ENCODE measurements at regions of chr2 and their contacts with region 1.

Region 1: DNA sequence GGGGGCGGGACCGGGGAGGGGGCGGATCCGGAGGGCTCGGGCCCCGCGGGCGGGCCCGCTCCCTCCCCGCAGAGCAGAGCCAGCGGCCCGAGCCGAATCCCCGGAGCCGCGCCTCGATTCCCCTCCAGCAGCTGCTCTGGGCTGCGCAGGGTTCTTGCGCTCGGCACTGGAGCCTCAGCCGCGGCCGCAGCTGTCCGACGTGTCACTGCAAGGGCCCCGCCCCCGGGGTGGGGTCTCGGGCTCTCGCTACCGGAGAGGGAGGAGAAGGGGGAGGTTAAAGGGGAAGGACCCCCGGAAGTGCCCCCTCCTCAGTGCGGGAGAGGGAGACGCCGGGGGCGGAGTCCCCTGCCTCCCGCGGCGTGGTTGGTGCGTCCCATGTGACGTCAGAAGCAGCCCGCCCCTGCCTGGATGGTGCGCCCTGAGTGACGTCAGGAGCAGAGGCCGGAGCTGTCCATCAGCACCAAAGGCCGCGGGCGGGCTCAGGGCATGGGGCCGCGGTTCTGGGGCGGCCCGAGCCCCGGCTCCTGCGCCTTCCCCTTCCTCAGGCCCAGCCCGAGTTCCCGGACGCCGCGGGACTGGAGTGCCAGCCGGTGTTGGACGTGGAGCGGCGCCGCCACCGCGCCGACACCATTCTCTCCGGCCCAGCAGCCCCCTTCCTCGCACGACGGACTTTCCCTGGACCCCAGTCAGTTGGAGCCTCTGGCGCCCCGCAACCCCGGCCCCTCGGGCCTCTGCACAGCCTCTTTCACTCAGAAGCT is at the starts of genes CHPF and TMEM198:
- DNase-seq: peak; percentile 97
- H3K4me3 Mint-ChIP-seq: peak within 1 kb of the TSS; percentile 79
- H3K27ac Mint-ChIP-seq: no peak within 1 kb of the TSS
- H3K4me1 Mint-ChIP-seq: peaks cover 20% of the 10 kb centered on the region
- H3K27me3 Mint-ChIP-seq: peaks cover 8% of the 10 kb centered on the region
- total RNA-seq, gene CHPF: 8.5 to 9.0 TPM
- total RNA-seq, gene TMEM198: 0.86 to 1.1 TPM

Region 2: DNA sequence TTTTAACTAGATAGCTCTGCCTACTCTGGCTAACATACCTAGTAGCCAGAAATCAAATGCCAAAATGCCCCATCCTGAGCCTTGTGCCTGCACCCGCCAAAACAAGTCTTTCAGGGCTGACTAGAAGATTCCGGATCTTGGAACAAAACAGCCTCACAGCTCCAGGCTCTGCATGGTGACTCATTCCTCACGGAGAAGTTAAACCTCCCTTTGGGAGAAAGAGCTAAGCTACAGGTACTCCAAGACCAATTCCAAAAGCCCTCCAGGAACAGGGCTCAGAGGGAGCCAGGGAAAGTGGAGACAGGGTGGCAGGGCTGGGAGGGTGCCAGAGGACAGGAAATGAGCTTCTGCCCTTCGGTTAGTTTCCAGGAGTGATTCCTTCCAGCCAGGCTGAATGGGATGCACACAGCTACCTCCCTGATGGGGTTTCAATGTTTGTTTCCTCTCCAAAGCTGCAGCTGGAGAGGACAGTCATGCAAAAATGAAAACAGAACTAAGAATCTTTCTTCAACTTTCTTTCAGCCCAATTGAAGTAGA is 1836.6 kb before region 1 on chr2:
- CTCF ChIA-PET with region 1: no interaction called
- intact Hi-C with region 1: no loop called
- DNase-seq: no peak
- H3K4me3 Mint-ChIP-seq: no peak overlapping the region
- H3K27ac Mint-ChIP-seq: no peak overlapping the region
- H3K4me1 Mint-ChIP-seq: no peaks in the 10 kb centered on the region
- H3K27me3 Mint-ChIP-seq: no peaks in the 10 kb centered on the region

Region 3: GRCh38 chr2:219160186-219161017 is 383.4 kb before region 1 on chr2 and contains the start of gene NHEJ1:
- CTCF ChIA-PET with region 1: no interaction called
- intact Hi-C with region 1: loop called (anchors 2 kb)
- DNase-seq: peak; percentile 96
- H3K4me3 Mint-ChIP-seq: peak within 1 kb of the TSS; percentile 80
- H3K27ac Mint-ChIP-seq: peak within 1 kb of the TSS; percentile 88
- H3K4me1 Mint-ChIP-seq: peaks cover 13% of the 10 kb centered on the region
- H3K27me3 Mint-ChIP-seq: no peaks in the 10 kb centered on the region
- total RNA-seq, gene NHEJ1: 24.4 to 26.6 TPM

Region 4: GRCh38 chr2:219459460-219460311 is 84.1 kb before region 1 on chr2:
- CTCF ChIA-PET with region 1: no interaction called
- intact Hi-C with region 1: no loop called
- DNase-seq: peak; percentile 55
- H3K4me3 Mint-ChIP-seq: no peak overlapping the region
- H3K27ac Mint-ChIP-seq: no peak overlapping the region
- H3K4me1 Mint-ChIP-seq: no peaks in the 10 kb centered on the region
- H3K27me3 Mint-ChIP-seq: no peaks in the 10 kb centered on the region

Region 5: GRCh38 chr2:219509780-219510511 is 33.8 kb before region 1 on chr2:
- CTCF ChIA-PET with region 1: interaction called, 9 read pairs
- intact Hi-C with region 1: loop called (anchors 1 kb)
- DNase-seq: peak; percentile 68
- H3K4me3 Mint-ChIP-seq: peak overlapping the region; percentile 26
- H3K27ac Mint-ChIP-seq: no peak overlapping the region
- H3K4me1 Mint-ChIP-seq: peaks cover 25% of the 10 kb centered on the region
- H3K27me3 Mint-ChIP-seq: peaks cover 41% of the 10 kb centered on the region

Region 6: DNA sequence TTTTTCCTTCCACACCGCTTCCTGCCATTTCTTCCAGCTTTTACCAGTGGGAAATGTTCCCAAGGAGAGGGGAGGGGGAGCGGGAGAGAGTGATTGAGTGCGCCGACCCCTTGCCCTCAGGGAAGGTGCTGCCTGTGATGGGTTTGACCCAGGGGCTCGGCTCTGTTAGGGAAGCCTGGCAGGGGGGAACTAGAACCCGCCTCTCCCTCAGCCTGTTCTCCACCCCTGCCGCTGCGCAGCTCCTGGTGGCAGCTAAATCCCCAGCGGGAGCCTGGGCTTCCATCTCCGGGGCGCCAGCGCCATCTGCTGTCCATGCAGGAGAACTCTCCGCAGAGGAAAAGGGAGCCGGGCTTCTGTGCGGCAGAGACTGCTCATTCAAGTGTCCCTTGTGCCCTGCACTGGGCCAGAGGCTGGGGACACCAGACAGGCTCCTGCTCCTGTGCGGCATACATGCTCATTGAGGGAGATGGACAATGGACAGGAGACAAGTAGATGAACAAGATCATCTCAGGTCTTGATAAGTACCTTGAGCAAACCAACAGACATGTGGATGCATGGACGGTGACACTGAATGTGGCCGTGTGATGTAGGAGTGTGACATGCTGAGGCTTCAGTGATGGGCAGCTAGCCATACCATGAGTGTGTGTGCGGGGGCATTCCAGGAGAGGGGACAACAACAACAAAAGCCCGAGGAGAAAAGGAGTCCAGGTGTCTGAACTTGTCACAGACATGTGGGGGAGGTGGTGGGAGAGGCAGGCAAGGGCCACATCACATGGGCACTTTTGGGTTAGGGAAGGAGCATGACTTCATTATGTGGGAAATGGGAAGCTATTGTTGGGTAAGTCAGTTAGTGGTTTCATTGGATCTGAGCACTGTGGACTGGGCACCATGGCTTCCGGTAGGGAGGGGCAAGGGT is 13.5 kb before region 1 on chr2:
- CTCF ChIA-PET with region 1: interaction called, 65 read pairs
- intact Hi-C with region 1: no loop called
- DNase-seq: peak; percentile 90
- H3K4me3 Mint-ChIP-seq: no peak overlapping the region
- H3K27ac Mint-ChIP-seq: no peak overlapping the region
- H3K4me1 Mint-ChIP-seq: no peaks in the 10 kb centered on the region
- H3K27me3 Mint-ChIP-seq: peaks cover 52% of the 10 kb centered on the region

Region 7: GRCh38 chr2:219597552-219598307 is 54.0 kb after region 1 on chr2 and contains the start of gene STK11IP:
- CTCF ChIA-PET with region 1: interaction called, 19 read pairs
- intact Hi-C with region 1: loop called (anchors 1 kb)
- DNase-seq: peak; percentile 96
- H3K4me3 Mint-ChIP-seq: peak within 1 kb of the TSS; percentile 94
- H3K27ac Mint-ChIP-seq: peak within 1 kb of the TSS; percentile 94
- H3K4me1 Mint-ChIP-seq: peaks cover 10% of the 10 kb centered on the region
- H3K27me3 Mint-ChIP-seq: no peaks in the 10 kb centered on the region
- total RNA-seq, gene STK11IP: 32.1 TPM

Region 8: DNA sequence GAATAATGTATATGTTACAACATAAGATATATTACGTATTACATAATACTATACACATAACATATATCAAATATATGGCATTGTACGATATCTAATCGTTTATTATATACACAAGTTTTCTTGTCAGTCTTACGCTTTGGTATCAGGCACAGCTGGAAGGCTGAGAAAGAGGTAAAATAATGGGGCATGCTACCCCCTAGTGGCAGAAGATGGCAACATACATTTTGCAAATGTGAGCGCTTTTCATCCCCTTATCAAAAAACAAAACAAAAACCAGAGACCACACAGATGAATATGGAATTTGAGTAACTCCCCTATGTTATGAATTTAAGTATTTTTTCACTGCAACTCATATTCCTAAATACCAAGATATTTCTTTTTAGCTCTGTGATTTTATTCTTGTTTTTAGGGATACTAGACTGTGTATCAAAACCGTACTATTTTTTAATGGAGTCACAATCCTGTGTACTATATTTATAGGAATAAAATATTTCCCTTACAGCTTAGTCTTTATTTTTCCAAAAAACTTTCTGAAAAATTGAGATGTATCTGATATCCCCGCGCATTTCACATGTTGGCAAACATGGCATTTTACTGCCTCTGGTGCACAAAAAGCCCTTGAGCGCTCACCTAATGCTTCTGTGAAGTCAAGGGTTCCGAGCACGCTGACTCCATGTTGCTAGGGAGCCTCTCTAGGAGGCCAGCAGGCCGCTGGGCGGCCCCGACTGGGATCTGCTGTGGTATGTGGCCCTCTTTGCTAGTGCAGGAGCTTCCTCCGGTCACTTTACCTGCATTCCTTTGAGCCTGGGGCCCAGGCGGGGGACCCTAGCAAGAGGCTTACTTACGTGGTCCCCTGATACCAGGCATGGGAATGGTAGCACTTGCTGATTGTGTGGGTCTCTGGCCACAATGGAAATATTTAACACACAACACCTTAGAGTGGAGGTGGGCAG is 146.2 kb after region 1 on chr2:
- CTCF ChIA-PET with region 1: interaction called, 24 read pairs
- intact Hi-C with region 1: loop called (anchors 1 kb)
- DNase-seq: peak; percentile 71
- H3K4me3 Mint-ChIP-seq: no peak overlapping the region
- H3K27ac Mint-ChIP-seq: no peak overlapping the region
- H3K4me1 Mint-ChIP-seq: peaks cover 7% of the 10 kb centered on the region
- H3K27me3 Mint-ChIP-seq: peaks cover 21% of the 10 kb centered on the region

Measured in activated naive CD4-positive, alpha-beta T cell treated with anti-CD3 and anti-CD28 coated beads for 36 hours (primary cell).